ENCODE measurements at regions of chr11 and their contacts with region 1.

Region 1: GRCh38 chr11:44893846-44894617 is 56.7 kb downstream of the TP53I11 start:
- DNase-seq: peak; percentile 72
- H3K4me3 Mint-ChIP-seq: no peak overlapping the region
- H3K27ac Mint-ChIP-seq: no peak overlapping the region
- H3K4me1 Mint-ChIP-seq: peaks cover 9% of the 10 kb centered on the region
- H3K27me3 Mint-ChIP-seq: no peaks in the 10 kb centered on the region

Region 2: GRCh38 chr11:44556735-44557409 is 337.2 kb before region 1 on chr11:
- CTCF ChIA-PET with region 1: interaction called, 15 read pairs
- POLR2A ChIA-PET with region 1: no interaction called
- intact Hi-C with region 1: loop called (anchors 5 kb)
- DNase-seq: peak; percentile 79
- H3K4me3 Mint-ChIP-seq: no peak overlapping the region
- H3K27ac Mint-ChIP-seq: no peak overlapping the region
- H3K4me1 Mint-ChIP-seq: peaks cover 29% of the 10 kb centered on the region
- H3K27me3 Mint-ChIP-seq: no peaks in the 10 kb centered on the region

Region 3: DNA sequence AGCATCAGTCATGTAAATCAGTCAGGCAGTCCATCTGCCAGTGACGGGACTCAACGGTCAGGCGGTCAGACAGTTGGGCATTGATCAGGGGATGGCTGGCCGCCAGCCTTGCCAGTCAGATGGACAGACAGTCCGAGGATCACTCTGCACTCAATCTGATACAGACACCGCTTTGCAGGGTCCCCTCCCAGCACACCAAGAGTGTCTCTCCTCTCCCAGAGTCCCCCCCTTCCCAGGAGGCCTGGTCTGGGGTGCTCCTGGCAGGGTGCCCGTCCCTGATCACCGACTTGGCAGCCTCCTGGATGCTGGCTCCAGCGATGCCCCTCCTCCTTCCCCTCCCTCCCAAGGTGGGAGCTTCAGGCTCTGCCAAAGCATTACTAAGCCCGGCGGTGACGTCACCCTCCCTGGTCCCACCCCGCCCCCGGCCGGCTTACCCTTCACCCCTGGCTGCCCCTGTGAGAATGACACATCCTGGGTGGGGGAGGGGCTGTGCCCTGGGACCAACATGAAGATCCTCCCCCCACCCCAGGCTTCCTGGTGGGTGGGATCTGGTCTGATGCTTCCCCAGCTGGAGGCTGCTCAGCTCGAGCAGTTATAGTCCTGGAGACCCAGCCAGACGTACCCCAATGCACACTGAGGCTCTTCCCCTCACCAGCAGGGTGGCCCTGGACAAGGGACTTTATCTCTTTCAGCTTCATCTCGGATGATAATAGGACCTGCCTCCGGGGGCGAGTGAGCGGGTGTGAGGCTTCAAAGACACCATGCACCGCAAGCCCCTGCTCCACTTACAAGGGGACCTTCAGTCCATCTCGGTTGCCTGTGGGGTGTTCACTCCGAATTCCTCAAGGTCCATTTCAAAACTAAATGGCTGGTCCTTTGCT is 259.4 kb before region 1 on chr11:
- CTCF ChIA-PET with region 1: no interaction called
- POLR2A ChIA-PET with region 1: no interaction called
- intact Hi-C with region 1: loop called (anchors 5 kb)
- DNase-seq: peak; percentile 38
- H3K4me3 Mint-ChIP-seq: no peak overlapping the region
- H3K27ac Mint-ChIP-seq: no peak overlapping the region
- H3K4me1 Mint-ChIP-seq: peaks cover 8% of the 10 kb centered on the region
- H3K27me3 Mint-ChIP-seq: peaks cover 4% of the 10 kb centered on the region

Region 4: GRCh38 chr11:44727373-44728287 is 166.4 kb before region 1 on chr11:
- CTCF ChIA-PET with region 1: interaction called, 5 read pairs
- POLR2A ChIA-PET with region 1: no interaction called
- intact Hi-C with region 1: loop called (anchors 1 kb)
- DNase-seq: peak; percentile 88
- H3K4me3 Mint-ChIP-seq: peak overlapping the region; percentile 82
- H3K27ac Mint-ChIP-seq: peak overlapping the region; percentile 67
- H3K4me1 Mint-ChIP-seq: peaks cover 51% of the 10 kb centered on the region
- H3K27me3 Mint-ChIP-seq: no peaks in the 10 kb centered on the region

Measured in activated CD4-positive, alpha-beta memory T cell treated with anti-CD3 and anti-CD28 coated beads for 36 hours (primary cell).